CD14-positive monocyte (primary cell): ENCODE measurements at regions of chr4 and their contacts with region 1.

Region 1: DNA sequence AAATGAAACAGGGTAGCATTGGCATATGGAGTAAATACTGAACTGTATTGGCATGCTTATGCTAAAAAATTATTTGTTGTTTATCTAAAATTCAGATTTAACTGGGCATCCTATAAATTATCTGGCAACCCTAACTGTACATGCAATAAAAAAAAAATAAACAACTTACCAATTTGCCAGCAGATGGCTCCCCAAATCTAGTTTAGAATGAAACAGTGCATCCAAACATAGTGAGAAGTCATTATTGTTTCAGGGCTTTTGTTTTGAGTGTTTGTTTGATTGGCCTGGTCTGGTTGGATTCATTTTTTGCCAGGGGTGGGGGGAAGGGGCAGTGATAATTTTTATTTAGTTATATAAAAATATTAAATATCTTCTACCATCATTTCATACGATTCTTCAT is 12.8 kb upstream of the NSUN7 start:
- DNase-seq: peak in 2 of 3 donors; percentile 36 to 49
- H3K4me3 ChIP-seq: no peak overlapping the region
- H3K4me3 Mint-ChIP-seq: no peak overlapping the region
- H3K27ac ChIP-seq: no peak overlapping the region
- H3K27ac Mint-ChIP-seq: no peak overlapping the region
- H3K4me1 ChIP-seq: peaks cover 32 to 34% of the 10 kb centered on the region in 2 donors
- H3K4me1 Mint-ChIP-seq: peaks cover 31% of the 10 kb centered on the region
- H3K27me3 ChIP-seq: no peaks in the 10 kb centered on the region
- H3K27me3 Mint-ChIP-seq: peaks cover 0 to 9% (median 0%) of the 10 kb centered on the region in 3 donors
- CTCF ChIP-seq: peak; percentile 58

Region 2: DNA sequence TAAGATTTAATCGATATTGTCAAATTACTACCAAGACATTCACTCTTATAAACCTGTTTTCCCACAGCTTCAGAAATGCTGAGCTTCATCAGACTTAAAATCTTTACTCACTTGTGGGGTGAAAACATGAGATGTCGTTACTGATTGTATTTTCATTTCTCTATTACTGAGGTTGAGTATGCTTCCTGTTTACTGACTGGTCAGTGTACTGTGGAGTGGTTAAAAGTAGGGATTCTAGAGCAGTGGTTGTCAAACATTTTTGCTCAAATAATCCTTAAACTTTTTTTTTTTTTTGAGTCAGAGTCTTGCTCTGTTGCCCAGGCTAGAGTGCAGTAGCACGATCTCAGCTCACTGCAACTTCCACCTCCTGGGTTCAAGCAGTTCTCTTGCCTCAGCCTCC is 63.2 kb after region 1 on chr4:
- intact Hi-C with region 1: no loop called
- DNase-seq: peak in 2 of 3 donors; percentile 20 to 28
- H3K4me3 ChIP-seq: no peak overlapping the region
- H3K4me3 Mint-ChIP-seq: peak overlapping the region in 1 of 2 donors; percentile 55
- H3K27ac ChIP-seq: peak overlapping the region in 1 of 2 donors; percentile 57
- H3K27ac Mint-ChIP-seq: peak overlapping the region; percentile 43 to 81 (median 75)
- H3K4me1 ChIP-seq: peaks cover 12 to 17% of the 10 kb centered on the region in 2 donors
- H3K4me1 Mint-ChIP-seq: peaks cover 16% of the 10 kb centered on the region
- H3K27me3 ChIP-seq: no peaks in the 10 kb centered on the region
- H3K27me3 Mint-ChIP-seq: peaks cover 0 to 2% (median 0%) of the 10 kb centered on the region in 3 donors
- CTCF ChIP-seq: no peak

Region 3: DNA sequence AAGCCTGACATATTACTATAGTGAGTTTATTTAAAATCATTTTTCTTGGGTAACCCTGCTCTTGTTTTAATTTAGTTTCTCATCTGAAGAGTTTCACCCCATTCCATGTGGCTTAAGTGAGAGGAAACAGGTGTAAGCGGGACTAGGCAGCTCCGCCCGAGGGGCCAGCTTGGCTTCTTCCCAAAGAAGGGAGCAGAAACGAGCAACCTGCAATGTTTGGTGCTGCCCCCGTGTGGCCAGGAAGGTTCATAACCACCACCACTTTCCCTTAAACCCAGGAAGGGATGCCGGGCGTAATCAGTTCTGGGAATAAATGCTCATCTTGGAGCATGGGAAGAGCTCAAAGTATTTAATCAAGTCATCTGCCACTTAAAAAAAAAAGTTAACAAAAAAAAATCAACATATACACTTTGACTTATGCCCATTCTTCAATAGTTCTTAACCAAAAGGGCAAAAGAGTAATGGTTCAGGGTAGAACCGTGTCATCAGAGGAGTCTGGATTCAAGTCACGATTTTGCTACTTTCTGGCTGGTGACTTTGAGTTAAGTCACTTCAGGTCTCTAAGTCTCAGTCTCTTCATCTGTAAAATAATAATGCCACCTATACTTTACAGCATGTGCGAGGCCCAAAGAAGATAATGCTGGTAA is 160.8 kb after region 1 on chr4:
- intact Hi-C with region 1: loop called (anchors 2 to 5 kb)
- DNase-seq: peak; percentile 44 to 62 (median 62)
- H3K4me3 ChIP-seq: peak overlapping the region in 1 of 3 experiments; percentile 47
- H3K4me3 Mint-ChIP-seq: peak overlapping the region; percentile 56 to 83
- H3K27ac ChIP-seq: no peak overlapping the region
- H3K27ac Mint-ChIP-seq: peak overlapping the region in 3 of 7 donors; percentile 42 to 93 (median 84)
- H3K4me1 ChIP-seq: peaks cover 4 to 6% of the 10 kb centered on the region in 2 donors
- H3K4me1 Mint-ChIP-seq: peaks cover 4% of the 10 kb centered on the region
- H3K27me3 ChIP-seq: no peaks in the 10 kb centered on the region
- H3K27me3 Mint-ChIP-seq: peaks cover 0 to 1% (median 0%) of the 10 kb centered on the region in 3 donors
- CTCF ChIP-seq: peak; percentile 95